IMR-90 (cell line): ENCODE measurements at regions of chr10 and their contacts with region 1.

Region 1: GRCh38 chr10:70549962-70550458 is 52.5 kb downstream of the PRF1 start:
- DNase-seq: peak; percentile 48
- ATAC-seq: peak; percentile 73
- H3K4me3 ChIP-seq: no peak overlapping the region
- H3K27ac ChIP-seq: no peak overlapping the region
- H3K4me1 ChIP-seq: peaks cover 9% of the 10 kb centered on the region
- H3K27me3 ChIP-seq: peaks cover 3% of the 10 kb centered on the region; the same call in 1 of the 2 replicates
- CTCF ChIP-seq: peak; percentile 80
- POLR2A ChIP-seq: no peak
- RAD21 ChIP-seq: peak; percentile 92

Region 2: GRCh38 chr10:69974551-69975155 is 575.4 kb before region 1 on chr10:
- CTCF ChIA-PET with region 1: no interaction called
- POLR2A ChIA-PET with region 1: no interaction called
- dilution Hi-C with region 1: no loop called
- in situ Hi-C with region 1: no loop called
- intact Hi-C with region 1: no loop called
- DNase-seq: peak; percentile 91
- ATAC-seq: peak; percentile 84
- H3K4me3 ChIP-seq: no peak overlapping the region
- H3K27ac ChIP-seq: no peak overlapping the region
- H3K4me1 ChIP-seq: peaks cover 5% of the 10 kb centered on the region
- H3K27me3 ChIP-seq: peaks cover 10% of the 10 kb centered on the region; the same call in 1 of the 2 replicates
- CTCF ChIP-seq: no peak
- POLR2A ChIP-seq: no peak
- RAD21 ChIP-seq: no peak

Region 3: GRCh38 chr10:70619271-70620019 is 69.4 kb after region 1 on chr10:
- CTCF ChIA-PET with region 1: interaction called, 3 read pairs
- POLR2A ChIA-PET with region 1: no interaction called
- dilution Hi-C with region 1: no loop called
- in situ Hi-C with region 1: no loop called
- intact Hi-C with region 1: loop called (anchors 2 kb)
- DNase-seq: peak; percentile 29
- ATAC-seq: no peak
- H3K4me3 ChIP-seq: no peak overlapping the region
- H3K27ac ChIP-seq: no peak overlapping the region
- H3K4me1 ChIP-seq: no peaks in the 10 kb centered on the region; the same call in 1 of the 2 replicates
- H3K27me3 ChIP-seq: peaks cover 7% of the 10 kb centered on the region
- CTCF ChIP-seq: peak; percentile 42
- POLR2A ChIP-seq: no peak
- RAD21 ChIP-seq: peak; percentile 56

Region 4: GRCh38 chr10:70672165-70673042 is 122.4 kb after region 1 on chr10 and contains the start of gene ADAMTS14:
- CTCF ChIA-PET with region 1: no interaction called
- POLR2A ChIA-PET with region 1: no interaction called
- dilution Hi-C with region 1: no loop called
- in situ Hi-C with region 1: no loop called
- intact Hi-C with region 1: loop called (anchors 5 kb)
- DNase-seq: no peak
- ATAC-seq: peak; percentile 68
- H3K4me3 ChIP-seq: peak within 1 kb of the TSS; percentile 57
- H3K27ac ChIP-seq: no peak within 1 kb of the TSS; the same call in 1 of the 2 replicates
- H3K4me1 ChIP-seq: peaks cover 7% of the 10 kb centered on the region; the same call in 1 of the 2 replicates
- H3K27me3 ChIP-seq: peaks cover 8% of the 10 kb centered on the region
- CTCF ChIP-seq: no peak
- POLR2A ChIP-seq: peak; percentile 47; the same call in 1 of the 2 replicates
- RAD21 ChIP-seq: no peak
- total RNA-seq, gene ADAMTS14: under 0.01 TPM in 2 replicates

Region 5: DNA sequence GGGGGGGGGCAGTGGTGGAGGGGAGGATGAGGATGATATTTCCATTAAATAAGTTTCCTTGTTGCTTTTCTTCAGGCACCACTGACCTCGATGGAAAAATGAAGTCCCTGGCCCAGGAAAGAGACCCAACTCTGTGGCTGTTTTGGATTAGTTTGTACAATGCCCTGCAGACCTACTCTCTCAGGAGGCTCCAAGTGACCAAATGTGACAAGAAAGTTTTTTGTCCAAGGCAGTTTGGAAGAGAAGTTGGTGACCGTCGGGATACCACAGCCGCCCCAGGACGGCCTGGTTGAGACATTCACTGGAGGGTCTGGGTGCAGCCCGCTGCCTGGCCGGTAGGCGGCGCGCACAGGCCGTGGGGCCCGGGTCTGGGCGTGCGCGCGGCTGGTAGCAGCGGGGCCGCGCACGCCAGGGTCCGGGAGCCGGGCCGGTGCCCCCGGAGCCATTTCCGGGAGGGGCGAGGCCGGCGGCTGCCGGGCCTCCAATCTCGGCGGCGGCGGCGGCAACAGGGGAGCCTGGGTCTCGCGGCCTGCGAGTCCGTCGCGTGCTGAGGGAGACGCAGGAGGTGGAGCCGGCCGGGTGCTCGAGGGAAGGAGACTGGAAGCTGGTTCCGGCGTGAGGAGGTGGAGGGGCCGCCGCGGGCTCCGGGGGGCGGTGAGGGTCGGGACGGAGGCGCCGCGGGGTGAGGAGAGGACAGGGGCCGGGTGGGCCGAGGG is 265.7 kb after region 1 on chr10 and contains the start of gene SGPL1:
- CTCF ChIA-PET with region 1: no interaction called
- POLR2A ChIA-PET with region 1: no interaction called
- dilution Hi-C with region 1: no loop called
- in situ Hi-C with region 1: no loop called
- intact Hi-C with region 1: loop called (anchors 2 kb)
- DNase-seq: peak; percentile 71
- ATAC-seq: peak; percentile 88
- H3K4me3 ChIP-seq: peak within 1 kb of the TSS; percentile 86
- H3K27ac ChIP-seq: peak within 1 kb of the TSS; percentile 87
- H3K4me1 ChIP-seq: no peaks in the 10 kb centered on the region
- H3K27me3 ChIP-seq: peaks cover 7% of the 10 kb centered on the region; the same call in 1 of the 2 replicates
- CTCF ChIP-seq: peak; percentile 99
- POLR2A ChIP-seq: peak; percentile 45; the same call in 1 of the 2 replicates
- RAD21 ChIP-seq: peak; percentile 97
- total RNA-seq, gene SGPL1: 26.7 and 27.5 TPM in 2 replicates